ENCODE measurements at regions of chr21 and their contacts with region 1.

Region 1: GRCh38 chr21:17679002-17679600 is 66.4 kb upstream of the BTG3 start:
- DNase-seq: peak; percentile 43
- H3K4me3 ChIP-seq: no peak overlapping the region
- H3K27ac ChIP-seq: no peak overlapping the region
- H3K4me1 ChIP-seq: peaks cover under 1% of the 10 kb centered on the region
- H3K27me3 ChIP-seq: no peaks in the 10 kb centered on the region
- CTCF ChIP-seq: peak; percentile 74

Region 2: DNA sequence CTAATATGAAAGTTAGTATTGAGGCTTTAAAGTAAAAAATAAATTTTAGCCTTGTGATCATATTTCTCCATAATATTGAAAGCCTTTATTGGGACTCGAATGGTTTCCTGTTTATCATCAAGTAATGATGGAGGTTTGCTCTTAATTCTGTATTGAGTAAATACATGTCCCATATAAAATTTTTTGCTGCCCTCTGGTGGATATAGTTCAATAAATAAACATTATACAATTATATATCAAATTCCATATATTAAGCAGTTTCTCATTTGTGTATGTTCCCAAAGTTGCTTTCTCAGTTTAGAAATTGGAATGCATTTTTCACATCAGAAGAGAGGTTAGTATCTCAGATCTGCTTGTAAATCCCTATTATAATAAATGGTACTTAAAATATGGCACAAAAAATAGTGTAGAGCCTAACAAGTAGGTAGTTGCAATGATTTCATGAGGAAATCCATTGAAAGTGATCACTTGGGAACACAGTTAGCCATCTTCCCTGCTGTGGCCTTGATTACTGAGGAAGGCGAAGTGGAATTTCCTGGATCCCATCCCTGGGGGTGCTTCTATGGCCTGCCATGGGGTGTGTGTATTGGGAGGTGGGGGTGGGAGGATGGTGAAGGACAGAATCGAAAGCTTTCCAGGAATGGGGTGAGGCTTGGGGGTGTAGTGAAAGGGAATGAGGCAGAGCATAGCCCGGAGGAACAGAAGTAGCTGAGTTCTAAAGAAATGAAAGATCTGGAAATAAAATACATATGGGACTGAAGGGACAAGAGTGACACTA is 224.1 kb after region 1 on chr21:
- CTCF ChIA-PET with region 1: no interaction called
- dilution Hi-C with region 1: loop called (anchors 25 kb)
- in situ Hi-C with region 1: loop called (anchors 5 kb)
- intact Hi-C with region 1: loop called (anchors 1 kb)
- DNase-seq: no peak
- H3K4me3 ChIP-seq: no peak overlapping the region
- H3K27ac ChIP-seq: no peak overlapping the region
- H3K4me1 ChIP-seq: peaks cover 3% of the 10 kb centered on the region
- H3K27me3 ChIP-seq: no peaks in the 10 kb centered on the region
- CTCF ChIP-seq: peak in 1 of 2 donors; percentile 25

Region 3: DNA sequence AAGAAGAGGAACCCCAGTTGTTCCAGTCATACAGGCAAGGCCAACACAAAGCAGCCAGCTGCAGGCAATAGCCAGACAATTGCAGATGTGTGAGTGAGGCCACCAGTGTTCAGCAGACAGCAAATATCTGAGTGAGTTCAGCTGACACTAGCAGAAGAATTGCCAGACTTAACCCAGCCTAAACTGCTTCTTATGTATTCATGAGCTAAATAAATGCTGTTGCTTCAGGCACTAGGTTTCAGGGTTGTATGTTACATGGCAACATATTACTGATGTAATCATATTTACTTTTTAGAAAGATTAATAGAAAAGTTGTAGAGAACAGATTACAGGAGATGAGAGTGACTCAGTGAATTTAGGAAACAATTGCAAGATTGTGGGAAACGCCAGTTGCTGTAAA is 435.7 kb after region 1 on chr21:
- CTCF ChIA-PET with region 1: no interaction called
- dilution Hi-C with region 1: no loop called
- in situ Hi-C with region 1: no loop called
- intact Hi-C with region 1: no loop called
- DNase-seq: no peak
- H3K4me3 ChIP-seq: no peak overlapping the region
- H3K27ac ChIP-seq: no peak overlapping the region
- H3K4me1 ChIP-seq: no peaks in the 10 kb centered on the region
- H3K27me3 ChIP-seq: no peaks in the 10 kb centered on the region
- CTCF ChIP-seq: no peak

Region 4: GRCh38 chr21:18298228-18298627 is 619.1 kb after region 1 on chr21:
- CTCF ChIA-PET with region 1: no interaction called
- dilution Hi-C with region 1: no loop called
- in situ Hi-C with region 1: no loop called
- intact Hi-C with region 1: loop called (anchors 10 kb)
- DNase-seq: no peak
- H3K4me3 ChIP-seq: no peak overlapping the region
- H3K27ac ChIP-seq: no peak overlapping the region
- H3K4me1 ChIP-seq: no peaks in the 10 kb centered on the region
- H3K27me3 ChIP-seq: no peaks in the 10 kb centered on the region
- CTCF ChIP-seq: no peak